Endothelial cell of umbilical vein (primary cell): ENCODE measurements at regions of chr7 and their contacts with region 1.

Region 1: GRCh38 chr7:121547544-121548092 is 151.5 kb upstream of the FAM3C start:
- DNase-seq: peak; percentile 67
- H3K4me3 ChIP-seq: no peak overlapping the region
- H3K27ac ChIP-seq: no peak overlapping the region
- H3K4me1 ChIP-seq: peaks cover 32% of the 10 kb centered on the region
- H3K27me3 ChIP-seq: no peaks in the 10 kb centered on the region
- CTCF ChIP-seq: peak; percentile 43 to 50
- POLR2A ChIP-seq: no peak

Region 2: GRCh38 chr7:120950539-120951308 is 596.9 kb before region 1 on chr7 and contains the start of gene ING3:
- CTCF ChIA-PET with region 1: no interaction called
- POLR2A ChIA-PET with region 1: no interaction called
- dilution Hi-C with region 1: no loop called
- intact Hi-C with region 1: loop called (anchors 10 kb)
- DNase-seq: peak; percentile 98
- H3K4me3 ChIP-seq: peak within 1 kb of the TSS; percentile 57 to 100 (median 98)
- H3K27ac ChIP-seq: peak within 1 kb of the TSS; percentile 96
- H3K4me1 ChIP-seq: peaks cover 18% of the 10 kb centered on the region
- H3K27me3 ChIP-seq: no peaks in the 10 kb centered on the region
- CTCF ChIP-seq: no peak
- POLR2A ChIP-seq: peak; percentile 82
- total RNA-seq, gene ING3: 19.4 and 19.6 TPM in 2 replicates

Region 3: DNA sequence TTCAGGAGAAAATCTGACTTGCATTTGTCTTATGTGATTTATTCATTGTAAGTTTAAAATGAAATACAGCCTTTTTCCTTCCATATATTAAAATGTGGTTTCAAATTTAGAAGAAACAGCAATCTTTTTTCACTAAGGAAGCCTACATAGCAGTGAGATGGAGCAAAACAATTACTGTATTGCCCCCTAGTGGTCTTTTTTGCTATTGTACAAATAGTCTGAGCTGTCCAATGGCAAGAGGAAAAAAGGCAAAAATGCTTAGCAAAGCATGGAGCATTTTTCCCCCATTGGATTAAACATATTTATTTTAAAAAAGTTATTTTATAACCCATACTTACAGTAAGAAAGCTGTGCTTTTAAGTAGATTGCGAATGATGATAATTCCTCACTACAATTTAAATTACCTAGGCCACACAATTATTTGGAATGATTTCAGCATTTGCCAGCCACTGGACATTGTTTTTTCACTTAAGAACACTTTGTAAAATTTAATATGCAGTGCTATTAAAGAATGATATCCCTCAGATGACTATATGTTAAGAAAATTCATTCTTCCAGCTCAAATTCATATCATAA is 439.6 kb before region 1 on chr7:
- CTCF ChIA-PET with region 1: interaction called, 3 read pairs
- POLR2A ChIA-PET with region 1: no interaction called
- dilution Hi-C with region 1: no loop called
- intact Hi-C with region 1: loop called (anchors 5 kb)
- DNase-seq: peak; percentile 78
- H3K4me3 ChIP-seq: no peak overlapping the region
- H3K27ac ChIP-seq: no peak overlapping the region
- H3K4me1 ChIP-seq: no peaks in the 10 kb centered on the region
- H3K27me3 ChIP-seq: peaks cover 12 to 16% of the 10 kb centered on the region in 2 experiments
- CTCF ChIP-seq: peak; percentile 57 to 59
- POLR2A ChIP-seq: no peak

Region 4: DNA sequence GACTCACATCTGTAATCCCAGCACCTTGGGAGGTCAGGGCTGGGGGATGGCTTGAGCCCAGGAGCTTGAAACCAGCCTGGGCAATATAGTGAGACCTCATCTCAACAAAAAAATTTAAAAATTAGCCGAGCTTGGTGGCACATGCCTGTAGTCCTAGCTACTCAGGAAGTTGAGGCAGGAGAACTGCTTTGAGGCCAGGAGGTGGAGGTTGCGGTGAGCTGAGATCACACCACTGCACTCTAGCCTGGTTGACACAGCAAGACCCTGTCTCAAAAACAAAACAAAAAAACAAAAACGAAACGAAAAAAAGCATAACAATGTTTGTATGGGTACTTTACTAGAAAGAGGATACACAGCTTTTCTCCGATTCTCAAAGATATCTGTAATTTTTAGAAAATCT is 187.1 kb before region 1 on chr7:
- CTCF ChIA-PET with region 1: interaction called, 14 read pairs
- POLR2A ChIA-PET with region 1: no interaction called
- dilution Hi-C with region 1: no loop called
- intact Hi-C with region 1: no loop called
- DNase-seq: no peak
- H3K4me3 ChIP-seq: no peak overlapping the region
- H3K27ac ChIP-seq: no peak overlapping the region
- H3K4me1 ChIP-seq: no peaks in the 10 kb centered on the region
- H3K27me3 ChIP-seq: no peaks in the 10 kb centered on the region
- CTCF ChIP-seq: no peak
- POLR2A ChIP-seq: no peak

Region 5: DNA sequence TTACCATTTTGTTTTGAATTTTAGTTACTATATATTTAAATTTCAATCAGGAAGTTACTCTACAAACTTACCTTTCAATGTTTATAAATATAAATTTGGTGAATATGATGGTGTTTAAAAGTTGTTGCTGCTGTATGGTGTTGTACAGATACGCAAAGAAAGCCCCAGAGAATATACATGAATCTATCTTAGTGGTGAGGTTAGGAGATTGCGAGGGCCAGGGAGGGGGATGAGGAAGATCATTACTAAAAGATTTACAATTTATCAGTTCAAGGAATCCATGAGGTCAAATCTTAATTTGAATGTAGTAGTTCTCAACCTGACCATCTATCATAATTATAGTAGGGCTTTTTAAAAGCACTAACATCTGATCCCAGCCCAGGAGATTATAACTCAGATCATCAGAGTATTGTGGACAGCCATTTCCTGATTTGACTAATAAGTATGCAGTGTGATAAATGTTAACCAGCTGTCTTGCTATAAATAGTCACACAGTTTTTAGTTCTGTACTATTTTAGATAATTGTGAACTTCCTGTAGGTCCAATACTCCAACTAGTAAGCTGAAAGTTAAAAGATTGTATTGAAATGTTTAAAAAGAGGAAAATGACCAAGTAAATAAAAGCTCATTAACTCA is 175.1 kb before region 1 on chr7:
- CTCF ChIA-PET with region 1: interaction called, 293 read pairs
- POLR2A ChIA-PET with region 1: interaction called, 4 read pairs
- dilution Hi-C with region 1: no loop called
- intact Hi-C with region 1: loop called (anchors 1 kb)
- DNase-seq: peak; percentile 67
- H3K4me3 ChIP-seq: no peak overlapping the region
- H3K27ac ChIP-seq: peak overlapping the region; percentile 37
- H3K4me1 ChIP-seq: peaks cover 16% of the 10 kb centered on the region
- H3K27me3 ChIP-seq: no peaks in the 10 kb centered on the region
- CTCF ChIP-seq: no peak
- POLR2A ChIP-seq: no peak

Region 6: DNA sequence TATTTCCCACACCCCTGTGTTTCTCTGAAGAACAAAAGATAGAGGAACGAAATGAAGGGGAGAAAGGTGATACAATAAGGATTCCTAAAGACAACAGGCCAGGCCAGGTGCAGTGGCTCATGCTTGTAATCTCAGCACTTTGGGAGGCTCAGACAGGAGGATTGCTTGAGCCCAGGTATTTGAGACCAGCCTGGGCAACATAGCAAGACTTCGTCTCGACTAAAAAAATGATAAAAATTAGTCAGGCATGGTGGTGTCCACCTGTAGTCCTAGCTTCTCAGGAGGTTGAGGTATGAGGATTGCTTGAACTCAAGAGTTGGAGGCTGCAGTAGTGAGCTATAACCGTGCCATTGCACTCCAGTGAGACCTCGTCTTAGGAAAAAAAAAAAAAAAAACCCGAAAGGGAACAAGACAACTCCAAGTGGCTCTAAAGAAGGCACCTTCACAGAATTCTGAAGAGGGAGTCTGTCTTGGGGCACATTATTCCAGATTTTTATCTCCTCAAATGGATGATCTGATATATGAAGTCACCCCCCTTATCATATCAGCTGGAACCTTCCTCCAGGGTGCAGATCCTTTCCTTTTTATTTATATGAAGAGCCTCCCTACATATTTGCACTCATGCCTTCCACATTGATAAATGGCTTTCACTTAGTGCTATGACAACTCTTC is 110.0 kb before region 1 on chr7:
- CTCF ChIA-PET with region 1: interaction called, 4 read pairs
- POLR2A ChIA-PET with region 1: no interaction called
- dilution Hi-C with region 1: no loop called
- intact Hi-C with region 1: loop called (anchors 2 kb)
- DNase-seq: peak; percentile 11
- H3K4me3 ChIP-seq: no peak overlapping the region
- H3K27ac ChIP-seq: no peak overlapping the region
- H3K4me1 ChIP-seq: peaks cover 10% of the 10 kb centered on the region
- H3K27me3 ChIP-seq: no peaks in the 10 kb centered on the region
- CTCF ChIP-seq: no peak
- POLR2A ChIP-seq: no peak

Region 7: GRCh38 chr7:121466455-121466854 is 81.2 kb before region 1 on chr7:
- CTCF ChIA-PET with region 1: no interaction called
- POLR2A ChIA-PET with region 1: no interaction called
- dilution Hi-C with region 1: no loop called
- intact Hi-C with region 1: no loop called
- DNase-seq: no peak
- H3K4me3 ChIP-seq: no peak overlapping the region
- H3K27ac ChIP-seq: no peak overlapping the region
- H3K4me1 ChIP-seq: no peaks in the 10 kb centered on the region
- H3K27me3 ChIP-seq: no peaks in the 10 kb centered on the region
- CTCF ChIP-seq: no peak
- POLR2A ChIP-seq: no peak

Region 8: DNA sequence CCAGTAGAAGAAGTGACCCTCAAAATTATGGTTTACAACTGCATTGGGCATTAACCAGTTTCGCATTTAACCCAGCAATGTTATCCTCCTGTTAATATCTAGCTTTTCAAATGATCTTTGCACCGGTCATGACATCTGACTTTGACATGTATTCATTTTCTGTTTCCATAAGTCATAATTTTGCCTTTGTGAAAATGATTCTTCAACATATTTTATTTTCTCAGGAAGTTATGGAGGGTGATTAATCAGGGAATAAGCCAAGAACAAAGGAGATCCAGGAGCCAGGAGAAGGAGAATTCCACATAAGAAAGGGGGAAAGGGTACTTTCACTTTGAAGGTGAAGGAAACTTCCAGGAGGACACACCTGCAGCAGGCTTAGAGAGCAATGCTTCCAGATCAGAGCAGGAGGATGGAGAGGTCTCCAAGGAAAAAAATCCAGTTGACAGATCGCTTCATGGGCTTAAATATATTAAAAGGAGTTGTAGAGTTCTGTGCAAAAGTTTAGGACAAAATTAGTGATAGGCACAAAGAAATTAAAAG is 59.4 kb before region 1 on chr7:
- CTCF ChIA-PET with region 1: no interaction called
- POLR2A ChIA-PET with region 1: no interaction called
- dilution Hi-C with region 1: no loop called
- intact Hi-C with region 1: no loop called
- DNase-seq: peak; percentile 27
- H3K4me3 ChIP-seq: no peak overlapping the region
- H3K27ac ChIP-seq: no peak overlapping the region
- H3K4me1 ChIP-seq: peaks cover 3% of the 10 kb centered on the region
- H3K27me3 ChIP-seq: no peaks in the 10 kb centered on the region
- CTCF ChIP-seq: no peak
- POLR2A ChIP-seq: no peak

Region 9: GRCh38 chr7:121530227-121531174 is 17.1 kb before region 1 on chr7:
- CTCF ChIA-PET with region 1: interaction called, 6 read pairs
- POLR2A ChIA-PET with region 1: no interaction called
- dilution Hi-C with region 1: no loop called
- intact Hi-C with region 1: loop called (anchors 1 kb)
- DNase-seq: peak; percentile 84
- H3K4me3 ChIP-seq: no peak overlapping the region
- H3K27ac ChIP-seq: peak overlapping the region; percentile 85
- H3K4me1 ChIP-seq: peaks cover 20% of the 10 kb centered on the region
- H3K27me3 ChIP-seq: no peaks in the 10 kb centered on the region
- CTCF ChIP-seq: no peak
- POLR2A ChIP-seq: no peak

Region 10: GRCh38 chr7:121689749-121690148 is 142.1 kb after region 1 on chr7:
- CTCF ChIA-PET with region 1: no interaction called
- POLR2A ChIA-PET with region 1: no interaction called
- dilution Hi-C with region 1: no loop called
- intact Hi-C with region 1: no loop called
- DNase-seq: no peak
- H3K4me3 ChIP-seq: no peak overlapping the region
- H3K27ac ChIP-seq: no peak overlapping the region
- H3K4me1 ChIP-seq: no peaks in the 10 kb centered on the region
- H3K27me3 ChIP-seq: no peaks in the 10 kb centered on the region
- CTCF ChIP-seq: no peak
- POLR2A ChIP-seq: no peak